PC-3 (cell line): ENCODE measurements at regions of chr3 and their contacts with region 1.

Region 1: DNA sequence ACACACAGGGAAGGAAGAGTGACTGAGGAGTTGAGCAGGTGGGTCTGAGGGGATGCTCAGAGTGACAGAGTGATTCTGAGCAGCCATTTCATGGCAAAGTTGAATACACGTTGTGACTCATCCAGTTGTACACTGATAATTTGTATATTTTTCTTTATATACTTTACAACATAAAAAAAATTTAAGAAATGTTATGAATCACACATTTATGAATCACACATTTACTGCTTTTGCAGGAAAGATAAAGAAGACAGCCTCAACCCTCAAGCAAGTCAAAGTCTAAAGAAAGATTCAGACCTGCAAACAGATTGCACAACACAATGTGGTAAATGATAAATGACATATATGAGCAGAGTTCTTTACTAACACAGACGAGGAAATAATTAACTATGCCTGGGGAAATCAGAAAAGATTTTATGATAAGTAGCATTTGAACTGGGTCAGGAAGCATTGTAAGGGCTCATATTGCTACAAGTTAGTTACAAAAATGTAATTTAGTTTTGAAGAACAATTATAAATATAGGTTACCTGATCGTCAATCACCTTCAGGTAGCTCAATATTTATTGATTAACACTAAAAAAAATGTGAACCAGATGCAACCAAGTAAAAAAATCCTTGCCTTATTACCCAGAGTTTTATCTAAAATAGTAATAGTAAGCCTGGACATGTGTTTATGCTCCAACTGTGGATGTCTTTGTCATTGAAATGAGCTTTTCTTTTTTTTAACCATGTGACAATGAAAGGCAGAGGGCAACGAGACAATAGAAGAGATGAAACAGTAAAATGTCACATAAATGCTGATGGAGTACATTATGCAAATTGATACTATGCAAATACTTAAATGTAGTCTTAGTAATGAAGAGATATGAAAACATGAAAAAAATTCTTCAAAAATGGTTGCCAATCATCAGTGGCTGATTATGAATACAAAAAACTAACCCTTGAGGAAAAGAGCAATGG is 20.8 kb upstream of the CHMP2B start:
- DNase-seq: peak; percentile 98
- ATAC-seq: peak; percentile 82
- H3K4me3 ChIP-seq: peak overlapping the region; percentile 15
- H3K27ac ChIP-seq: peak overlapping the region; percentile 91
- H3K4me1 ChIP-seq: peaks cover 52% of the 10 kb centered on the region
- H3K27me3 ChIP-seq: no peaks in the 10 kb centered on the region
- CTCF ChIP-seq: no peak

Region 2: DNA sequence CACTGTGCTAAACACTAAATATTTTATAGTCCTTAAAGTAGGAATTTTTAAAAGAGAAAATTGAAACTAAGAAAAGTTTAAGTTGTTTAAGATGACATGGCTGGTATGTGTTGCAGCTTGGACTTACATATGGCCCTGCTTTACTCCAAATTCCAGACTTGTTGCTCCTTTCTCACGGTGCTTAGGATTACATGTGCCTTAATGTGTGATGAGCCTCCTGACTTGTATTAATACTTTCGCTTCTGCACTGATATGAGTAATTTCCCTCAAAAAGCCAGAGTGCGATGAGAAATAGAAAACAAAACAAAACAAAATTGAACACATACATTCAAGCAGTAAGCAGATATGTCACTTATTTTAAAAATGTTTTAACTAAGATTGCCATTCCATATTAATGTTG is 465.6 kb before region 1 on chr3:
- CTCF ChIA-PET with region 1: no interaction called
- POLR2A ChIA-PET with region 1: no interaction called
- intact Hi-C with region 1: no loop called
- DNase-seq: no peak
- ATAC-seq: no peak
- H3K4me3 ChIP-seq: no peak overlapping the region
- H3K27ac ChIP-seq: no peak overlapping the region
- H3K4me1 ChIP-seq: peaks cover 6% of the 10 kb centered on the region
- H3K27me3 ChIP-seq: no peaks in the 10 kb centered on the region
- CTCF ChIP-seq: no peak

Region 3: DNA sequence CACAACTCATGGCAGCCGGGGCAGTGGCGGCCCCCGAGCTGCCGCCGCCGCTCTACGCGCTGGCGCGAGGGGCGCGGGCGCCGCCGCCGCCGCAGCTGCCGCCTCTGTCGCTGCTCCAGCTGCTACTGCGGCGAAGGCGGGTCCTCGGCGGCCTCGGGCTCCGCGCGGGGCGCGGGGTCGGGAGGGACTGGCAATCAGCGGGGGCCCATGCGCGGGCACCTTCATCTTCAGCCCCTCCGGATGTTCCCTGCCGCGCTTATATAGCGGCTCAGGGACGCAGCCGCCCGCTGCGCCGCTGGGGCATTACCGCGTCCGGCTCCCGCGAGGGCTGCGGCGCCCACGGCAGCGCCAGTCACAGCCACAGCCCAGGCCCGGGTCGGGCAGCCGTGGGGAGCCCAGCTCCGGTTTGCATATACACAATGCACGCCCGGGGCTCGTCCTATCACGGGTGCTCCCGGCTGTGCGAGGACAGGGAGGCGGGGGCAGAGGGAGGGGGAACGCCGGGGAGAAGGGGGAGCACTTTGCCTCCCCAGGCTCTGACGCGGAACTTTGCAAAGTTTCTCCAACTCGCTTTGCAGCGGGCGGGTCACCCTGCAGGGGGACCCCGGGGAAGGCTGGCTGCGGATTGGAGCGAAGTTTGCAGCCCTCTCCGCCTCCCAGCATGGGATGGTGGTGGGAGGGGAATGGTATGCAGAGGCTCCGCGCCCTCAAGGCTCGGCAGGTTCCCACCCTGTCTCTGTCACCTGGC is 215.4 kb before region 1 on chr3 and contains the start of gene VGLL3:
- CTCF ChIA-PET with region 1: no interaction called
- POLR2A ChIA-PET with region 1: no interaction called
- intact Hi-C with region 1: loop called (anchors 2 kb)
- DNase-seq: peak; percentile 55
- ATAC-seq: peak; percentile 70
- H3K4me3 ChIP-seq: peak within 1 kb of the TSS; percentile 85
- H3K27ac ChIP-seq: peak within 1 kb of the TSS; percentile 4; the same call in 1 of the 2 replicates
- H3K4me1 ChIP-seq: peaks cover 42% of the 10 kb centered on the region
- H3K27me3 ChIP-seq: no peaks in the 10 kb centered on the region
- CTCF ChIP-seq: 0 out of 2 replicates have a peak, but pooled peaks have one; percentile 10
- total RNA-seq, gene VGLL3: 1.3 and 1.8 TPM in 2 replicates

Region 4: DNA sequence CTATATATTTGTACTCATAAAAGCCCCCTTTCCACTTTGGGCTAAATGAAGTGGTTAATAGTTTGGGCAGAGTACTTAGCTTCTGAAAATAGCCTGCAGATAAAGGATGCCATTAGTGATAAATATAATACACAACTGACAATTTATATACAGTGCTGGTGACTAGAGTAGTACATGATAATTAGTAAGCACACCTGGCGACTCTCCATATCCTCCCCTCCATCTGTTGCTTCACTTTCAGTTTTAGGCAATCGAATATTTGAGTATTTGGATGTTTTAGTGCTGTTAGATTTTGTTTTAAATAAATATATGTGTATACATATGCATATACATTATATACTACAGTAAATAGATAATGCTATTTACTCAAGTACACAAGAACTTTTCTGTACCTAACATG is 15.2 kb before region 1 on chr3:
- CTCF ChIA-PET with region 1: no interaction called
- POLR2A ChIA-PET with region 1: no interaction called
- intact Hi-C with region 1: loop called (anchors 2 kb)
- DNase-seq: no peak
- ATAC-seq: peak; percentile 21
- H3K4me3 ChIP-seq: 0 out of 2 replicates have a peak overlapping the region, but pooled peaks have one; percentile 7
- H3K27ac ChIP-seq: no peak overlapping the region
- H3K4me1 ChIP-seq: peaks cover 15% of the 10 kb centered on the region
- H3K27me3 ChIP-seq: no peaks in the 10 kb centered on the region
- CTCF ChIP-seq: no peak

Region 5: GRCh38 chr3:87247430-87247773 is 41.0 kb after region 1 on chr3:
- CTCF ChIA-PET with region 1: no interaction called
- POLR2A ChIA-PET with region 1: no interaction called
- intact Hi-C with region 1: loop called (anchors 1 kb)
- DNase-seq: peak; percentile 22
- ATAC-seq: peak; percentile 56
- H3K4me3 ChIP-seq: no peak overlapping the region
- H3K27ac ChIP-seq: peak overlapping the region; percentile 59
- H3K4me1 ChIP-seq: peaks cover 30% of the 10 kb centered on the region
- H3K27me3 ChIP-seq: no peaks in the 10 kb centered on the region
- CTCF ChIP-seq: no peak

Region 6: DNA sequence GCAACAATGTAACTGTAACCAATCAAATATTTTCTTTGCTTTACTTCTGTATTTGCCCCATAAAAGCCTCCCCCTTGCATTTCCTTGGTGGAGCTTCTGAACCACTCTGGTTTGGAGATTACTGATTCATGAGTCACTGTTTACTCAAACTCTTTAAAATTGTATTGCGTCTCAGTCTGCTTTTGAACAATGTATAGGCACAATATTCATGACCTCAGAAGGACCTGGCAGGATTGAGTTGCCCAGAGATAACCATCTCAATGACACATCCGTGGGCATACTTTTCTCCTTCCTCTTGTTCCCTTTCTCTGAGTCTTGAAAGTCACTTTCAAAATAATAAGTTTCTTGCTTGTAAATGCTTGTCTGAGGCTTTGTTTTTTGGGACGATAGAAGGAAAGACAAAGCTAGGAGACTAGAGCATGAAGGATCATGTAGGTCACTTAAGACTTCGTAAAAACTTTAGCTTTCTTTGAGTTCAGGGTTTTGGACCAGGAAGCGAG is 127.1 kb after region 1 on chr3:
- CTCF ChIA-PET with region 1: no interaction called
- POLR2A ChIA-PET with region 1: no interaction called
- intact Hi-C with region 1: loop called (anchors 5 kb)
- DNase-seq: peak; percentile 99
- ATAC-seq: peak; percentile 91
- H3K4me3 ChIP-seq: peak overlapping the region; percentile 38; the same call in 1 of the 2 replicates
- H3K27ac ChIP-seq: peak overlapping the region; percentile 98
- H3K4me1 ChIP-seq: peaks cover 43% of the 10 kb centered on the region
- H3K27me3 ChIP-seq: no peaks in the 10 kb centered on the region
- CTCF ChIP-seq: no peak